ENCODE measurements at regions of chr15 and their contacts with region 1.

Region 1: DNA sequence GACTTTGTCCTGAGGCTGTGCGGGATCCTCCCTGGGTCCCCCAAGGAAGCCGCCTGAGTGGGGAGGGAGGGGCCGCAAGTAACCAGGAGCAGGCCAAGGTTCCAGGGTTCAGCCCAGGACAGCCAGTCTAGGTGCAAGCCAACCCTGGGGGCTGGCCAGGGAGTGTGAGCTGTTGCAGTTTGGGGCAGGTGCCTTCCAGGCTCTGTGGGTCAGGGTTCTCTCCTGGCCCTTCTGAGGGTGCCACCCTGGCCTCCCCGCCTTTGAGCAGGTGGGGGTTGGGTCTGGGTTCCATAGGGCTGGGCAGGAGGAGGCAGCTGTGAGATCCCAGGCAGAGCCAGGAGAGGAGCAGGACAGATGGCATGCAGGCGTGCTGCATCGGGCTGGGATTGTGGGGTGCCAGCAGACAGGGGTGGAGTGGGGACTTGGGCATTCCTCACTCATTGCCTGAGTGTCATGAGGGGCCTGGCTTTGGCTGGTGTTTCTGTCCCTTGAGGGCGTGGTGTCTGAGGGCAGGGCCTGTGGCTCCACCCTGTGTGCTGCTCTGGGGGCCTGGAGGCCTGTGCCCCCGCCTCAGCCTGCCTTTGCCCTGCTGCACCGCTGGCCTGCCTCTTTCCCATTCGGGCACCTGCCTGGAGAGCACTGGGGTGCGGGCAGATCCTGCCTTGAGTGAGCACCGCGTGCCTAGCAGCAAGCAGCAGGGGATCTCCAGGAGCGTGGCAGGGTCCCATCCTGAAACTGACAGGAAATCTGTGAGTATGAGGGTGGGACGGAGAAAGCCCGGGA is 18.4 kb downstream of the KLF13 start:
- DNase-seq: no peak
- H3K4me3 ChIP-seq: no peak overlapping the region
- H3K27ac ChIP-seq: peak overlapping the region in 1 of 2 donors; percentile 17
- H3K4me1 ChIP-seq: peaks cover 6% of the 10 kb centered on the region
- H3K27me3 ChIP-seq: no peaks in the 10 kb centered on the region
- CTCF ChIP-seq: no peak
- POLR2A ChIP-seq: no peak

Region 2: DNA sequence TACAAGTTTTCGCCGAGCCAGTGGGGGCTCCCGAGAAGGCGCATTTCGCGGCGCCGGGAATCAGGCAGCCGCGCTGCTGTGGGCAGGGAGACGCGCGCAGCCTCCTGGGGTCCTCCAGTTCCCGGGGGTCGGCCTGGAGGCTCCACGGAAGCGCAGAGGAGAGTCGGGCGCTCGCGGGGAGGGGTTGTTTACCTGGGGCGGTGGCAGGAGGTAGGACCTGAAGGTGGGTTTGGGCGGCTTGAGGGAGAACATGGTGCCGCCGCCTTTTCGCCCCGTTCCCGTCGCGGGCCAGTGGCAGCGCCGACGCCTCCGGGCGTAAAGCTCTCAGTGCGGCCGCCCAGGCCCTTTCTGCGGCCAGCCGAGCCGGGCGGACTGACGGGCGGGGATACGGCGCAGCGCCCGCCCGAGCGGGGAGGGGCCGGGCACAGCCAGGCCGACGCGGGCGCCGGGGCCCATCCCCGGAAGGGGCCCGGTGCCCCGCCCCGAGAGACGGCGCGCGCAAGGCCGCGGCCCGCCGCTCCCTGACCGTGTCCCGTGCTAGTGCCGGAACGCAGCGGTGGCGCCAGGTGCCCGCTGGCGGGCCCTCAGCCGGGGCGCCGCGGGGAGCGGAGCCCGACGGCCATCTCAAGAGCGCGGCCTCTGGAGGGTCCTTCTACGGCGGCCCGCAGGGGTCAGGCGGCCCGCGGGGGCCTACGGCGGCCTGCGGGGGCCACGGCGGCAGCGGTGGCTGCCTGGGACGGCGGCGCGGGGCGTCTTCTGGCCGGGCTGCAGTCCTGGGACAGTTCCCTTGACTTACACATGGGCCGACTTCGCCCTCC is 353.6 kb before region 1 on chr15 and contains the start of gene MTMR10:
- intact Hi-C with region 1: loop called (anchors 5 kb)
- DNase-seq: peak; percentile 64
- H3K4me3 ChIP-seq: peak within 1 kb of the TSS; percentile 80 to 91
- H3K27ac ChIP-seq: peak within 1 kb of the TSS; percentile 94 to 95
- H3K4me1 ChIP-seq: no peaks in the 10 kb centered on the region
- H3K27me3 ChIP-seq: no peaks in the 10 kb centered on the region
- CTCF ChIP-seq: peak in 1 of 4 experiments; percentile 21
- POLR2A ChIP-seq: peak; percentile 68
- total RNA-seq, gene MTMR10: 32.5 to 35.2 TPM

Region 3: GRCh38 chr15:31615643-31616415 is 270.8 kb after region 1 on chr15:
- intact Hi-C with region 1: no loop called
- DNase-seq: no peak
- H3K4me3 ChIP-seq: no peak overlapping the region
- H3K27ac ChIP-seq: no peak overlapping the region
- H3K4me1 ChIP-seq: no peaks in the 10 kb centered on the region
- H3K27me3 ChIP-seq: no peaks in the 10 kb centered on the region
- CTCF ChIP-seq: no peak
- POLR2A ChIP-seq: no peak

Region 4: GRCh38 chr15:31733424-31733823 is 388.4 kb after region 1 on chr15:
- intact Hi-C with region 1: no loop called
- DNase-seq: no peak
- H3K4me3 ChIP-seq: no peak overlapping the region
- H3K27ac ChIP-seq: no peak overlapping the region
- H3K4me1 ChIP-seq: no peaks in the 10 kb centered on the region
- H3K27me3 ChIP-seq: no peaks in the 10 kb centered on the region
- CTCF ChIP-seq: no peak
- POLR2A ChIP-seq: no peak

Measured in prostate gland (tissue), 2 donors.